ENCODE measurements at regions of chr17 and their contacts with region 1.

Region 1: GRCh38 chr17:1573916-1574696 is 11.5 kb upstream of the PITPNA start:
- H3K4me3 Mint-ChIP-seq: peak overlapping the region; percentile 14
- H3K27ac Mint-ChIP-seq: peak overlapping the region; percentile 99
- H3K4me1 Mint-ChIP-seq: peaks cover 83% of the 10 kb centered on the region
- H3K27me3 Mint-ChIP-seq: no peaks in the 10 kb centered on the region

Region 2: GRCh38 chr17:1078831-1079561 is 495.1 kb before region 1 on chr17:
- intact Hi-C with region 1: no loop called
- H3K4me3 Mint-ChIP-seq: no peak overlapping the region
- H3K27ac Mint-ChIP-seq: peak overlapping the region; percentile 63
- H3K4me1 Mint-ChIP-seq: peaks cover 42% of the 10 kb centered on the region
- H3K27me3 Mint-ChIP-seq: no peaks in the 10 kb centered on the region

Region 3: GRCh38 chr17:1413281-1413791 is 160.8 kb before region 1 on chr17:
- intact Hi-C with region 1: no loop called
- H3K4me3 Mint-ChIP-seq: no peak overlapping the region
- H3K27ac Mint-ChIP-seq: no peak overlapping the region
- H3K4me1 Mint-ChIP-seq: peaks cover 7% of the 10 kb centered on the region
- H3K27me3 Mint-ChIP-seq: no peaks in the 10 kb centered on the region

Region 4: DNA sequence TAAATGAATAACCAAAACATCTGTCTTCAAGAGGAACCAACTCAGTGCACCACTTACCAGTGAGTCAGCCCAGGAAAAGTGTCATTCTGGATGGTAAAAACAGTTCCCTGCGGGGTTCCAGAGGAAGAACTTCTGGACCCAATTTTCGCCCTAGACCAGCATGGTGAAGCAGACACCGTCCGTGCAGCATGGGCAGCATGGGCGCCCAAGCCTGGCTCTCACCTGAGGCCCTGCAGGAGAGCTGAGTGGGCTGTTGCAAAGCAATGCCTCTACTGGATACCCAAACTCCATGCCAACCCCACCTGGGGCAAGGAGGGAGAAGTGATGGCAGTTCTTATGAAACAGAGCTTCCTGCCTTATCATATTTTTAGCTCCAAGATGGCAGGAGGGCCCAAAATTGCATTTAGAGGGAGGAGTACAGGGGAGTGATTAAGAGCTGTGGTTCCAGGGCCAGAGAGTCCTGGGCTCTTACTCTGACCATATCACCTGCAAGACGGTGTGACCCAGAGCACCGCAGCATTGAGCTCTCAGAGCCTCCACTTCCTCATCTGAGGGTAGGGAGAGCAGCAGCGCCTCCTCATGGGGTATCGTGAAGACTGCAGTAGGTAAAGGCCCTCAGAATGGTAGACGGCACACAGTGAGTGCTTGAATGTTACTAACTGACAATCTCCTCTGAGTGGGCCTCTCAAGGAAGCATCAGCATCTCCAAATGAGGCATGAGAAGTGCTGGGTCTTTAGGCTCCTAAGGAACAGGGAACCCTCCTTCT is 41.1 kb before region 1 on chr17:
- intact Hi-C with region 1: no loop called
- H3K4me3 Mint-ChIP-seq: no peak overlapping the region
- H3K27ac Mint-ChIP-seq: peak overlapping the region; percentile 19
- H3K4me1 Mint-ChIP-seq: peaks cover 16% of the 10 kb centered on the region
- H3K27me3 Mint-ChIP-seq: no peaks in the 10 kb centered on the region

Region 5: GRCh38 chr17:1590031-1590748 is 16.1 kb after region 1 on chr17:
- intact Hi-C with region 1: loop called (anchors 1 kb)
- H3K4me3 Mint-ChIP-seq: peak overlapping the region; percentile 26
- H3K27ac Mint-ChIP-seq: peak overlapping the region; percentile 84
- H3K4me1 Mint-ChIP-seq: peaks cover 79% of the 10 kb centered on the region
- H3K27me3 Mint-ChIP-seq: no peaks in the 10 kb centered on the region

Region 6: GRCh38 chr17:1606352-1607033 is 32.4 kb after region 1 on chr17:
- intact Hi-C with region 1: loop called (anchors 1 kb)
- H3K4me3 Mint-ChIP-seq: peak overlapping the region; percentile 61
- H3K27ac Mint-ChIP-seq: peak overlapping the region; percentile 96
- H3K4me1 Mint-ChIP-seq: peaks cover 67% of the 10 kb centered on the region
- H3K27me3 Mint-ChIP-seq: no peaks in the 10 kb centered on the region

Region 7: DNA sequence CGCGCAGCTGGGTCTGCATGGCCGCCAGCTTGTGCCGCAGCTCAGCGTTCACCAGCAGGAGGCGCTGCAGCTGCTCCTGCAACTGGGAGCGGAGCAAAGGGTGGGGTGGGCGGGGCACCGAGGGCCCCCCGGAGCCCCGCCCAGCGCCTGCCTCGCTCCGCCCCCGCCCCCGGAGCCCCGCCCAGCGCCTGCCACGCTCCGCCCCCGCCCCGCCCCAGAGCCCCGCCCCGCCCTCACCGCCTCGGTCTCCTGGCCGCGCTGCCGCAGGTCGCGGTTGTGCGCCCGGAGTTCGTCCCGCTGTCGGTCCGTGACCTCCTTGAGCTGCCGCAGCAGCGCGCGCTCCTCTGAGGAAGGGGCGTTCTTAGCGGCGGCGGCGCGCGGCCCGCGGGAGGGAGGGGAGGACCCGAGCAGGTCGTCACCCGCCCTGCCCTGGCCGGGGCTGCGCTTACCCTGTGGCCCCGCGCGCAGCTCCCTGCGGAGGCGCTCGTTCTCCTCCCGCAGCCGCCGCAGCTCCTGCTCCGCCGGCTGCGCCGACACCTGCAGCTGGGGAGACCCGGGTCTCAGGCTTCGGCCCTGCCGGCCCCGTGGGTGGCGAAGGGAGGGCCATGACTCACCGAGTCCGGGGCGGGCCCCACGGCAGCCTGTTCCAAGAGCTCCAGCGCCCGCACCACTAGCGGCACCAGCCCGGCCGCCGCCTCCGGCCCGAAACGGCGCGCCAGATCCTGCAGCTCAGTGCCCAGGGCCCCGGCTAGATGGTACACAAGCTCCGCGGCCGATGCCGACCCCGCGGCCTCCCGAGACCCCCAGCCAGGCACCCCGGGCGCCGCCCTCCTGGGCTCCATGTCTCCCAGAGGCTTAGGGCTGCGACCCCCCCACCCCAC is 75.1 kb after region 1 on chr17:
- intact Hi-C with region 1: loop called (anchors 2 kb)
- H3K4me3 Mint-ChIP-seq: peak overlapping the region; percentile 83
- H3K27ac Mint-ChIP-seq: peak overlapping the region; percentile 90
- H3K4me1 Mint-ChIP-seq: peaks cover 77% of the 10 kb centered on the region
- H3K27me3 Mint-ChIP-seq: no peaks in the 10 kb centered on the region

Region 8: DNA sequence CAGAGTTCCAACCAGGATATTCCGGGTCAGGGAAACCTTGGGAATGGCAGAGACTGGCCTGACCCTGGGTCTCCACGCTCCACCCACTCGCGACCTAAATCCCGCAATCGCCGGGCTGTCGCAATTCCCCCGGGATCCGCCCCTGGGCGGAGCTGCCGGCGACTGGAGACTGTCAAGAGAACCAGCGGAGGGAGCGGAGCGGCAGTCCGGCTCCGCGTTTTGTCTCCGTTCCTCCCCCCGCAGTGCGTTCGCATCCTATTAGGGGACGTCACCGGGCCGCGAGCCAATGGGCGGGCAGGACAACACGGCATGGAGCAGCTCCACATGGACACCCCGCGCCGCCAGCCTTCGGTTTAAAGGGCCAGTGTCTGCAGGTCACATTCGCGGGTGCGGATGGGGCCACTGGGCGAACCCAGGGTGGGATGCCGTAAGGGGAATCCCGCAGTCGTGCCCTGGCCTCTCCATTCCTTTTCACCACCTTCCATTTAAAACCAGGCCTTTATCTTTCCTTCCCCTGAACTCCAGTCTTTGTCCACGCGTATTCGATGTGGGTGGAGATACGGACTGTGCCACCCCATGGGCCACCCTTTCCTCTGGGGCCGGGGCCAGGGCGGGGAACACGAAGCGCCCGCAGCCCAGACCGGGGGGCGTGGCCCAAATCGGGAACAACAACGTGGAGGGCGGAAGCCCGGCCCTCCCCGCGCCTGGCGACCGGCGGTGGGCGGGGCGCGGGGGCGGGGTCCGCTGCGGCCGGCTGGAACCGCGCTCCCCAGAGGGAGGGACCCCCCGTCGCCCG is 827.5 kb after region 1 on chr17:
- intact Hi-C with region 1: loop called (anchors 10 kb)
- H3K4me3 Mint-ChIP-seq: peak overlapping the region; percentile 99
- H3K27ac Mint-ChIP-seq: peak overlapping the region; percentile 95
- H3K4me1 Mint-ChIP-seq: peaks cover 73% of the 10 kb centered on the region
- H3K27me3 Mint-ChIP-seq: no peaks in the 10 kb centered on the region

Measured in dendritic cell treated with granulocyte-macrophage colony-stimulating factor and Interleukin-4, amounts not matched to agents 40 ng/mL and 50 ng/mL, for 4 days (primary cell).